B cell (primary cell): ENCODE measurements at regions of chr17 and their contacts with region 1.

Region 1: DNA sequence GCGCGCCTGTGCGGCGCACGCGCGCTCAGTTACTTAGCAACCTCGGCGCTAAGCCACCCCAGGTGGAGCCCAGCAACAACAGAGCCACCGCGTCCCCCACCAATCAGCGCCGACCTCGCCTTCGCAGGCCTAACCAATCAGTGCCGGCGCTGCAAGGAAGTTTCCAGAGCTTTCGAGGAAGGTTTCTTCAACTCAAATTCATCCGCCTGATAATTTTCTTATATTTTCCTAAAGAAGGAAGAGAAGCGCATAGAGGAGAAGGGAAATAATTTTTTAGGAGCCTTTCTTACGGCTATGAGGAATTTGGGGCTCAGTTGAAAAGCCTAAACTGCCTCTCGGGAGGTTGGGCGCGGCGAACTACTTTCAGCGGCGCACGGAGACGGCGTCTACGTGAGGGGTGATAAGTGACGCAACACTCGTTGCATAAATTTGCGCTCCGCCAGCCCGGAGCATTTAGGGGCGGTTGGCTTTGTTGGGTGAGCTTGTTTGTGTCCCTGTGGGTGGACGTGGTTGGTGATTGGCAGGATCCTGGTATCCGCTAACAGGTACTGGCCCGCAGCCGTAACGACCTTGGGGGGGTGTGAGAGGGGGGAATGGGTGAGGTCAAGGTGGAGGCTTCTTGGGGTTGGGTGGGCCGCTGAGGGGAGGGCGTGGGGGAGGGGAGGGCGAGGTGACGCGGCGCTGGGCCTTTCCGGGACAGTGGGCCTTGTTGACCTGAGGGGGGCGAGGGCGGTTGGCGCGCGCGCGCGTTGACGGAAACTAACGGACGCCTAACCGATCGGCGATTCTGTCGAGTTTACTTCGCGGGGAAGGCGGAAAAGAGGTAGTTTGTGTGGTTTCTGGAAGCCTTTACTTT is at the start of gene UBB:
- DNase-seq: peak; percentile 97
- ATAC-seq: peak; percentile 89
- H3K4me3 ChIP-seq: peak within 1 kb of the TSS; percentile 73 to 96 (median 91)
- H3K4me3 Mint-ChIP-seq: peak within 1 kb of the TSS; percentile 84
- H3K27ac ChIP-seq: peak within 1 kb of the TSS; percentile 97 to 98
- H3K27ac Mint-ChIP-seq: peak within 1 kb of the TSS; percentile 97
- H3K4me1 ChIP-seq: peaks cover 32 to 43% of the 10 kb centered on the region in 2 donors
- H3K4me1 Mint-ChIP-seq: peaks cover 45% of the 10 kb centered on the region
- H3K27me3 ChIP-seq: no peaks in the 10 kb centered on the region
- H3K27me3 Mint-ChIP-seq: no peaks in the 10 kb centered on the region
- CTCF ChIP-seq: no peak
- total RNA-seq, gene UBB: 765 and 769 TPM in 2 replicates

Region 2: DNA sequence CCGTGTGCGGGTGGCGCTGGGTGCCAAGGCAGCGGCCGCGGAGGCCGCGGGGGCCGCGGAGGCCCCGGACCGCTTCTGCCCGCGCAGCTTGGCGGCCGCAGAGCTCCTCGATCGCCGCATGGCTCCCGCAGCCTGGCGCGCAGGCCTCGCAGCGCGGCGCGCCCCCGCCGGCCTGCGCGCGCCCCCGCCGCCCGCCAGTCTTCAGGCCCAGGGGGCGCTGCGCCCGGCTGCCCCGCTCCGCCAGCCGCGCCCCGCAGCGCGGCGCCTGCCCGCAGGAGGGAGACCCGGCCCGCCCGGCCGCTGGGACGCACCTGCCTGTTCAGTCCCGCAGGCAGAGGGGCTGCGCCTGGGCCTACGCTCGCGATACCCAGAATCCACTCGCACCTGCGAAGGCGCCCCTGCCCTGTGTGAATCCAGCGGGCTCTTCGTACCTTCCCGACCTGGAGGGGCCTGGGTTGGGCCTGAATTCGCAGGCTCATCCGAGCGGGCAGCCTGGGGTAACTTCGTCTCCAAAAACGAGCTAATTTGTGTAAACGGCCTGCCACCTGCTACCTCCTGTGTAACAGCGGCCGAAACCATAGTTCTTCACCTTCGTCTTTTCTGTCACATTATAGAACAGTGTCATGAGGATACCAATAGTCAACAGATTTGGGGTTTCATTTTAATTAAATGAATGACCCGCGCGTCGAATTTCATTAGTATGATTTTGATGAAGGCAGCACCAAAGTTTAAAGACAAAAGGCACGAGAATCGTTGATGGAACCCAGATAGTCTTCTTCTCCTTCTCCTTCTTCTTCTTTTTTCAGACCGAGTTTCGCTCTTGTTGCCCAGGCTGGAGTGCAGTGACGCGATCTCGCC is 27.3 kb before region 1 on chr17 and contains the start of gene CENPV:
- CTCF ChIA-PET with region 1: interaction called, 5 read pairs
- POLR2A ChIA-PET with region 1: interaction called, 4 read pairs
- intact Hi-C with region 1: loop called (anchors 1 kb)
- DNase-seq: peak; percentile 86
- ATAC-seq: peak; percentile 87
- H3K4me3 ChIP-seq: peak within 1 kb of the TSS; percentile 51 to 78 (median 70)
- H3K4me3 Mint-ChIP-seq: peak within 1 kb of the TSS; percentile 94
- H3K27ac ChIP-seq: peak within 1 kb of the TSS in 1 of 2 donors; percentile 56
- H3K27ac Mint-ChIP-seq: peak within 1 kb of the TSS; percentile 80
- H3K4me1 ChIP-seq: peaks cover 8 to 16% of the 10 kb centered on the region in 2 donors
- H3K4me1 Mint-ChIP-seq: peaks cover 15% of the 10 kb centered on the region
- H3K27me3 ChIP-seq: no peaks in the 10 kb centered on the region
- H3K27me3 Mint-ChIP-seq: no peaks in the 10 kb centered on the region
- CTCF ChIP-seq: no peak
- total RNA-seq, gene CENPV: 15.8 and 17.7 TPM in 2 replicates

Region 3: DNA sequence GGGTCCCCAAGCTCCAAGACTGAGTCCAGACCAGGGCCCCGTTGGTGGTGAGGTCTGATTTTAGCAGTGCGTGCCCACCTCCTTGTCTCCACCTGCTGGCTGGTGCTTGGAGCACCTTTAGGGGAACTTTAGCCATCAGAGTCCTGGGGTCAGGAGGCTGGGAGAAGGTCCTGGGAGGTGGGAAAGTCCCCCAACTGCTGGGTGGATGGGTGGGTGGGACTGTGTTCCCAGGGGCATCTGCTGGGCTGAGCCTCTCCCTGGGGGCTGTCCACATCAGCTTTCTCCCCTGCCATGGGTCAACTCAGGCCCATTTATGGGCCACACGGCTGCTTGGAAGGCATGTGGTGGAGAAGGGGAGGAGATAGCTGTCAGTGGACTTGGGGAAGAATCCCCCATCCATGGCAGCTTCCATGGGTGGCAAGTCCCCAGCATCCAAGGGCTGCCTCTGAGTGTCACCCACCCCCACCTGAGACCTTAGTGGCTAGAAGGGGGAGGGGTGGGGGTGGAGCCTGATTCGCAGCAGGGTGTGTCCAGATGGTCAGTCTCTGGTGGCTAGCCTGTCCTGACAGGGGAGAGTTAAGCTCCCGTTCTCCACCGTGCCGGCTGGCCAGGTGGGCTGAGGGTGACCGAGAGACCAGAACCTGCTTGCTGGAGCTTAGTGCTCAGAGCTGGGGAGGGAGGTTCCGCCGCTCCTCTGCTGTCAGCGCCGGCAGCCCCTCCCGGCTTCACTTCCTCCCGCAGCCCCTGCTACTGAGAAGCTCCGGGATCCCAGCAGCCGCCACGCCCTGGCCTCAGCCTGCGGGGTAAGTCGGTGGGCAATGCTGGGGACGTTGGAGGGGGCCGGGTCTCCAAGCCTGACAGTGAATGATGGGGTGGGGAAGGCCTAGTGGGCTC is 34.4 kb after region 1 on chr17 and contains the start of gene TRPV2:
- CTCF ChIA-PET with region 1: interaction called, 34 read pairs
- POLR2A ChIA-PET with region 1: interaction called, 22 read pairs
- intact Hi-C with region 1: loop called (anchors 1 kb)
- DNase-seq: peak; percentile 73
- ATAC-seq: peak; percentile 47
- H3K4me3 ChIP-seq: peak within 1 kb of the TSS; percentile 53 to 86 (median 67)
- H3K4me3 Mint-ChIP-seq: peak within 1 kb of the TSS; percentile 98
- H3K27ac ChIP-seq: peak within 1 kb of the TSS; percentile 94 to 98
- H3K27ac Mint-ChIP-seq: peak within 1 kb of the TSS; percentile 95
- H3K4me1 ChIP-seq: peaks cover 27 to 48% of the 10 kb centered on the region in 2 donors
- H3K4me1 Mint-ChIP-seq: peaks cover 42% of the 10 kb centered on the region
- H3K27me3 ChIP-seq: no peaks in the 10 kb centered on the region
- H3K27me3 Mint-ChIP-seq: no peaks in the 10 kb centered on the region
- CTCF ChIP-seq: peak; percentile 64
- total RNA-seq, gene TRPV2: 58.6 TPM in 2 replicates

Region 4: DNA sequence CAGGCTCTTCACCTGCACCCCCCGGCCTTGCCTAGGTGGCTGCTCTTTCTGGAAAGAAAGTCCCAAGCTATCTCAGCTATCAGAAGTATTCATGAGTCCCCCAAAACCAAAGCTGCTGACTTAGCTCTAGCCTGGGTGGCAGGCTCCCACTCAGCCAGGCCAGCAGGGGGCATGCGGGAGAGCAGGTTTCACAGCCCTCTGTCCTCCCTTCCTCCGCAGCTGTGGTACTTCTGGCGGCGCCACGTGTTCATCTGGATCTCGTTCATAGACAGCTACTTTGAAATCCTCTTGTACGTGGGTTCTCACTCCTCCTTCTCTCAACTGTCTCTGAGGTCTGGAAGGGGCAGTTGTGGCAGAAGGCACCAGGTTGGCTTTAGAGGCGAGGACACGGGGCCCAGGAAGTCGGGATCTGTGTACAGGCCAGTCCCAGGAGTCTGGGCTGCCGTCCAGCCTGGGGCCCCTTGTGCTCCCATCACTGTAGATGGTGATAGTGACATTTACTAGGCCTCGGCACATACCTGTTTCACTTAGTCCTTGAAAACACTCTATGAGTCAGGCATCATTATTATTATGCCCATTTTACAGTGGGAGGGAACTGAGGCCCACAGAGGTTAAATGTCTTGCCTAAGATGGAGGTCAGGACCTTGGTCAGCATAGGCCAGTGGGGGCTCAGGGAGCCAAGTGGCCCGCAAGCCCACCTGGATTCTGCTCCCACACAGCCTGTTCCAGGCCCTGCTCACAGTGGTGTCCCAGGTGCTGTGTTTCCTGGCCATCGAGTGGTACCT is 47.4 kb after region 1 on chr17:
- CTCF ChIA-PET with region 1: interaction called, 7 read pairs
- POLR2A ChIA-PET with region 1: interaction called, 10 read pairs
- intact Hi-C with region 1: no loop called
- DNase-seq: no peak
- ATAC-seq: peak; percentile 67
- H3K4me3 ChIP-seq: no peak overlapping the region
- H3K4me3 Mint-ChIP-seq: no peak overlapping the region
- H3K27ac ChIP-seq: no peak overlapping the region
- H3K27ac Mint-ChIP-seq: no peak overlapping the region
- H3K4me1 ChIP-seq: no peaks in the 10 kb centered on the region
- H3K4me1 Mint-ChIP-seq: no peaks in the 10 kb centered on the region
- H3K27me3 ChIP-seq: no peaks in the 10 kb centered on the region
- H3K27me3 Mint-ChIP-seq: no peaks in the 10 kb centered on the region
- CTCF ChIP-seq: peak; percentile 39

Region 5: DNA sequence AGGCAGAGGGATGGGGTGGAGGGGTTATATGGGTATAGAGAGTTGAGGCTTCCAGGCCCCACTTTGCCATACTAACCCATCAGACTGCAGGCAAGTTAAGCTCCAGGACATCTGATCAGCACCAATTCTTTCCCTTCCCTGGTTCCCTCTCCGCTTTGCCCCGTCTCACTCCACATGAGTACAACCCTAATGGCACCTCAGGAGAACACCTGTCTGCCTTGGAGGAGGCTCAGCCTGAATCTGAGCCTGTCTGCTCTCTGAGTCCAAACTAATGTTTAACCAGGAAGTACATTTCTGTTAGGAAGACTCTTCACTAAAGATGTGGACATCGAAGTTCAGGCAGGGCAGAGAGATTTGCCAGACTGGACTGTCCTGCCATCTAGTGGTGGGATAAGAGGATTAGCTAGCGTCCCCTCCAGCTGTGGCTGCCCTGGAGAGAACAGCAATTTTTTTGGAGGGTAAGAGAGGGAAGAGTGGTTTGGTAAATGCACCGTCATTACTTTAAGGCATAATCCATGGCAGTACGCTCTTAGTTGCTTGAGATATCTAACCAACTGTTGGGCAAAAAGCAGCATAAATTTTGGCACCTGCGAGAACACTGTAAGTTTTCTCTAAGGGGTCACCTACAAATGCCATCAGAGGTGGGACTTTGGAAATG is 140.3 kb after region 1 on chr17:
- CTCF ChIA-PET with region 1: interaction called, 14 read pairs
- POLR2A ChIA-PET with region 1: no interaction called
- intact Hi-C with region 1: no loop called
- DNase-seq: peak; percentile 80
- ATAC-seq: peak; percentile 88
- H3K4me3 ChIP-seq: no peak overlapping the region
- H3K4me3 Mint-ChIP-seq: no peak overlapping the region
- H3K27ac ChIP-seq: no peak overlapping the region
- H3K27ac Mint-ChIP-seq: no peak overlapping the region
- H3K4me1 ChIP-seq: peaks cover 0 to 4% of the 10 kb centered on the region in 2 donors
- H3K4me1 Mint-ChIP-seq: peaks cover 7% of the 10 kb centered on the region
- H3K27me3 ChIP-seq: peaks cover 0 to 18% (median 7%) of the 10 kb centered on the region in 4 experiments
- H3K27me3 Mint-ChIP-seq: peaks cover 51% of the 10 kb centered on the region
- CTCF ChIP-seq: peak; percentile 86